ENCODE measurements at regions of chr16 and their contacts with region 1.

Region 1: DNA sequence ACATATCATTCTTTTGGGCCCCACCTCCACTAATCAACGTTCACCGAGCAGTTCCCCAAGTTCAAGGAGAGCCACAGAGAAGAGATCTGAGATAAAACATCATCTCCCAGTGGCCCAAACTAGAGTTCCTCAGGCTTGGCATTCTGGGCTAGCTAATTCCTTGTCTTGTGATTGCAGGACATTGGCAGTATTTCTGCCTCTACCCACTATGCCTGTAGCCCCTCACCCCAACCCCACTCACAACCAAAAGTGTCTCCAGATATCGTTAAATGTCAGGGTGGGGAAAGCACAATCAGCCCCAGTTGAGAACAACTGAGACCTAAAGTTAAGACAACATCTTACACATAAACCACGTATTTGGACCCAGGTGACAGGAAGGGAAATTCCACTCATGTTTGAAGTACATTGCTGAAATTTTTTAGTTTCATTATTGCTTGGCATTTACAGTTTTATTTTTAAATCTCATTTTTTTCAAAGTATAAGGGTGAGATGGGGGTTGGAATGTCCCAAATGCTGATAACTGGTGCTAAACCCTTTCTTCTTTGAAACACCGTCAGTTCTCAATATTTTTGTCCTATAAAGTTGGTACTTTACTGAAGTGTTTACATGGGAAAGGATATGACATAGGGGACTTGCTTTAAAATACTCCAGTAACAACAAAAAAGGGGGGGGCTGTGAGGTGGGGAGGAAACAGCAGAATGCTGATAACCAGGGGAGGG is 13.6 kb downstream of the ZC3H7A start:
- DNase-seq: no peak
- H3K4me3 Mint-ChIP-seq: peak overlapping the region; percentile 61
- H3K27ac Mint-ChIP-seq: peak overlapping the region; percentile 95
- H3K4me1 Mint-ChIP-seq: peaks cover 37% of the 10 kb centered on the region
- H3K27me3 Mint-ChIP-seq: no peaks in the 10 kb centered on the region
- CTCF ChIP-seq: no peak

Region 2: GRCh38 chr16:11742539-11743307 is 40.8 kb before region 1 on chr16 and contains the start of gene TXNDC11:
- CTCF ChIA-PET with region 1: interaction called, 4 read pairs
- POLR2A ChIA-PET with region 1: interaction called, 44 read pairs
- intact Hi-C with region 1: no loop called
- DNase-seq: peak; percentile 97
- H3K4me3 Mint-ChIP-seq: peak within 1 kb of the TSS; percentile 86
- H3K27ac Mint-ChIP-seq: peak within 1 kb of the TSS; percentile 94
- H3K4me1 Mint-ChIP-seq: peaks cover 31% of the 10 kb centered on the region
- H3K27me3 Mint-ChIP-seq: no peaks in the 10 kb centered on the region
- CTCF ChIP-seq: no peak
- total RNA-seq, gene TXNDC11: 38.2 and 43.7 TPM in 2 replicates

Region 3: GRCh38 chr16:11750056-11750455 is 33.4 kb before region 1 on chr16:
- CTCF ChIA-PET with region 1: no interaction called
- POLR2A ChIA-PET with region 1: interaction called, 4 read pairs
- intact Hi-C with region 1: loop called (anchors 2 kb)
- DNase-seq: no peak
- H3K4me3 Mint-ChIP-seq: no peak overlapping the region
- H3K27ac Mint-ChIP-seq: no peak overlapping the region
- H3K4me1 Mint-ChIP-seq: no peaks in the 10 kb centered on the region
- H3K27me3 Mint-ChIP-seq: no peaks in the 10 kb centered on the region
- CTCF ChIP-seq: no peak

Region 4: GRCh38 chr16:11768849-11769248 is 14.6 kb before region 1 on chr16:
- CTCF ChIA-PET with region 1: interaction called, 5 read pairs
- POLR2A ChIA-PET with region 1: interaction called, 14 read pairs
- intact Hi-C with region 1: no loop called
- DNase-seq: no peak
- H3K4me3 Mint-ChIP-seq: no peak overlapping the region
- H3K27ac Mint-ChIP-seq: no peak overlapping the region
- H3K4me1 Mint-ChIP-seq: no peaks in the 10 kb centered on the region
- H3K27me3 Mint-ChIP-seq: no peaks in the 10 kb centered on the region
- CTCF ChIP-seq: no peak

Region 5: GRCh38 chr16:11797166-11797956 is 13.9 kb after region 1 on chr16 and contains the start of gene ZC3H7A:
- CTCF ChIA-PET with region 1: interaction called, 34 read pairs
- POLR2A ChIA-PET with region 1: interaction called, 115 read pairs
- intact Hi-C with region 1: no loop called
- DNase-seq: peak; percentile 97
- H3K4me3 Mint-ChIP-seq: peak within 1 kb of the TSS; percentile 91
- H3K27ac Mint-ChIP-seq: peak within 1 kb of the TSS; percentile 99
- H3K4me1 Mint-ChIP-seq: peaks cover 32% of the 10 kb centered on the region
- H3K27me3 Mint-ChIP-seq: no peaks in the 10 kb centered on the region
- CTCF ChIP-seq: peak; percentile 81
- total RNA-seq, gene ZC3H7A: 66.9 and 74.1 TPM in 2 replicates

Region 6: DNA sequence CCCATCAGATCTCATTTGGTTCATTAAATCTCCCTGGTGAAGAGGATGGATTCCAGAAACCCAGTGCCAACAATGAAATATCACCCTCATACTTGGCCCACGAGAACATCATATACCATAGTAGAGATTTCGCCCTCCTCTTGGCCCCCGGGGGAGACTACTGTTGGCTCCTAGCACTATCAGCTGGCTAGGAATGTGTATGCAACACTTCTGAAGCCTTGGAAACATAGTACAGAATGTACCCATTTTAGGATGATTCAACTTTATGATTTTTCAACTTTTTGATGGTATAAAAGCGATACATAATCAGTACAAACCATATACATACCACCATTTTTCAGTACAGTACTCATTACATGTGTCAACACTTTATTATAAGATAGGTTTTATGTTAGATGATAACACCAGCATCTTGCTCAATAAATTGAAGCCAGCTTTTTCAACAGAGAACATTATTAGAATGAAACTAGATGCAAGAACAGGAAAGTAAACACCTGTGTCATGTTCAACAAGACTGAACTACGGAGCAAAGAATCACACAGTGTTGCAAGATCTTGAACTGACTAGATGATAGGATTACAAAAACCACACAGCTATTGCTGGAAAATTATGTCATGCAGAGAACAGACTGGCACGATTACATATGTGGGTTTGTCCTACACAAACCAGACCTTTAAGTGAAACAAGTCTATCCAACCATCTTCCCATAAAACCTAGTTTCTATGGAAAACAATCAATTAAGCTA is 50.6 kb after region 1 on chr16:
- CTCF ChIA-PET with region 1: interaction called, 4 read pairs
- POLR2A ChIA-PET with region 1: interaction called, 20 read pairs
- intact Hi-C with region 1: no loop called
- DNase-seq: peak; percentile 92
- H3K4me3 Mint-ChIP-seq: peak overlapping the region; percentile 63
- H3K27ac Mint-ChIP-seq: peak overlapping the region; percentile 98
- H3K4me1 Mint-ChIP-seq: peaks cover 19% of the 10 kb centered on the region
- H3K27me3 Mint-ChIP-seq: no peaks in the 10 kb centered on the region
- CTCF ChIP-seq: no peak

Region 7: GRCh38 chr16:11851294-11852091 is 68.0 kb after region 1 on chr16 and contains the start of gene RSL1D1:
- CTCF ChIA-PET with region 1: no interaction called
- POLR2A ChIA-PET with region 1: interaction called, 30 read pairs
- intact Hi-C with region 1: loop called (anchors 5 kb)
- DNase-seq: peak; percentile 92
- H3K4me3 Mint-ChIP-seq: peak within 1 kb of the TSS; percentile 93
- H3K27ac Mint-ChIP-seq: peak within 1 kb of the TSS; percentile 90
- H3K4me1 Mint-ChIP-seq: peaks cover 22% of the 10 kb centered on the region
- H3K27me3 Mint-ChIP-seq: no peaks in the 10 kb centered on the region
- CTCF ChIP-seq: no peak
- total RNA-seq, gene RSL1D1: 302 and 406 TPM in 2 replicates